ENCODE measurements at regions of chr1 and their contacts with region 1.

Region 1: GRCh38 chr1:11099310-11100149 is at the start of gene EXOSC10:
- DNase-seq: peak; percentile 94
- H3K4me3 ChIP-seq: peak within 1 kb of the TSS; percentile 92 to 100 (median 92)
- H3K27ac ChIP-seq: peak within 1 kb of the TSS; percentile 81 to 87 (median 86)
- H3K4me1 ChIP-seq: peaks cover 0 to 20% (median 15%) of the 10 kb centered on the region in 4 donors
- H3K27me3 ChIP-seq: no peaks in the 10 kb centered on the region
- CTCF ChIP-seq: no peak
- EP300 ChIP-seq: no peak
- POLR2A ChIP-seq: peak; percentile 39 to 57
- total RNA-seq, gene EXOSC10: 33.5 to 53.7 (median 40.1) TPM

Region 2: DNA sequence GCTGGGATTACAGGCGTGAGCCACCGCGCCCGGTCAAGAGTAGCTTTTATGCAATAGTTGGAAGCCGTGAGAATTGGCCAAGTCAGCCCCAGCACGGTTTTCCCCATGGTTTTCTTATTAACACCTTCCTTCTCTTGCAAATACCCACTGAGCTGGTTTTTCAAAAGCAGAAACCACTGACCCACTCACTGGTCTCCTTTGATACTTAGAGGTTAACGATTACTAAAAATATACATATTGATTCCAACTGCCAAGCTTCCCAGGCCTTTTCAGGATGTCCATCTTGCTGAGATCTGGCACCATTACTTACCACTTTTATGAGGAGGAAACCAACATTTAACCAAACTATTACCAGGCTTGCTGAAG is 113.0 kb before region 1 on chr1:
- intact Hi-C with region 1: no loop called
- DNase-seq: no peak
- H3K4me3 ChIP-seq: no peak overlapping the region
- H3K27ac ChIP-seq: no peak overlapping the region
- H3K4me1 ChIP-seq: no peaks in the 10 kb centered on the region
- H3K27me3 ChIP-seq: no peaks in the 10 kb centered on the region
- CTCF ChIP-seq: no peak
- EP300 ChIP-seq: no peak
- POLR2A ChIP-seq: no peak

Region 3: GRCh38 chr1:11026052-11026451 is 73.5 kb before region 1 on chr1:
- intact Hi-C with region 1: loop called (anchors 10 kb)
- DNase-seq: no peak
- H3K4me3 ChIP-seq: no peak overlapping the region
- H3K27ac ChIP-seq: no peak overlapping the region
- H3K4me1 ChIP-seq: peaks cover 0 to 3% (median 0%) of the 10 kb centered on the region in 4 donors
- H3K27me3 ChIP-seq: no peaks in the 10 kb centered on the region
- CTCF ChIP-seq: no peak
- EP300 ChIP-seq: no peak
- POLR2A ChIP-seq: no peak

Region 4: GRCh38 chr1:11059990-11060830 is 39.3 kb before region 1 on chr1 and contains the start of gene SRM:
- intact Hi-C with region 1: loop called (anchors 2 kb)
- DNase-seq: peak; percentile 94
- H3K4me3 ChIP-seq: peak within 1 kb of the TSS; percentile 83 to 100 (median 94)
- H3K27ac ChIP-seq: peak within 1 kb of the TSS; percentile 75 to 79 (median 78)
- H3K4me1 ChIP-seq: peaks cover 0 to 27% (median 26%) of the 10 kb centered on the region in 4 donors
- H3K27me3 ChIP-seq: no peaks in the 10 kb centered on the region
- CTCF ChIP-seq: peak in 1 of 4 experiments; percentile 55
- EP300 ChIP-seq: no peak
- POLR2A ChIP-seq: peak in 1 of 2 donors; percentile 59
- total RNA-seq, gene SRM: 27.2 to 32.1 (median 30.0) TPM

Region 5: GRCh38 chr1:11214698-11215380 is 115.3 kb after region 1 on chr1:
- intact Hi-C with region 1: no loop called
- DNase-seq: no peak
- H3K4me3 ChIP-seq: no peak overlapping the region
- H3K27ac ChIP-seq: no peak overlapping the region
- H3K4me1 ChIP-seq: no peaks in the 10 kb centered on the region
- H3K27me3 ChIP-seq: no peaks in the 10 kb centered on the region
- CTCF ChIP-seq: no peak
- EP300 ChIP-seq: no peak
- POLR2A ChIP-seq: no peak

Region 6: GRCh38 chr1:11434506-11434905 is 335.0 kb after region 1 on chr1:
- intact Hi-C with region 1: no loop called
- DNase-seq: no peak
- H3K4me3 ChIP-seq: no peak overlapping the region
- H3K27ac ChIP-seq: no peak overlapping the region
- H3K4me1 ChIP-seq: no peaks in the 10 kb centered on the region
- H3K27me3 ChIP-seq: peaks cover 0 to 43% (median 0%) of the 10 kb centered on the region in 3 donors
- CTCF ChIP-seq: no peak
- EP300 ChIP-seq: no peak
- POLR2A ChIP-seq: no peak